ENCODE measurements at regions of chr6 and their contacts with region 1.

Region 1: DNA sequence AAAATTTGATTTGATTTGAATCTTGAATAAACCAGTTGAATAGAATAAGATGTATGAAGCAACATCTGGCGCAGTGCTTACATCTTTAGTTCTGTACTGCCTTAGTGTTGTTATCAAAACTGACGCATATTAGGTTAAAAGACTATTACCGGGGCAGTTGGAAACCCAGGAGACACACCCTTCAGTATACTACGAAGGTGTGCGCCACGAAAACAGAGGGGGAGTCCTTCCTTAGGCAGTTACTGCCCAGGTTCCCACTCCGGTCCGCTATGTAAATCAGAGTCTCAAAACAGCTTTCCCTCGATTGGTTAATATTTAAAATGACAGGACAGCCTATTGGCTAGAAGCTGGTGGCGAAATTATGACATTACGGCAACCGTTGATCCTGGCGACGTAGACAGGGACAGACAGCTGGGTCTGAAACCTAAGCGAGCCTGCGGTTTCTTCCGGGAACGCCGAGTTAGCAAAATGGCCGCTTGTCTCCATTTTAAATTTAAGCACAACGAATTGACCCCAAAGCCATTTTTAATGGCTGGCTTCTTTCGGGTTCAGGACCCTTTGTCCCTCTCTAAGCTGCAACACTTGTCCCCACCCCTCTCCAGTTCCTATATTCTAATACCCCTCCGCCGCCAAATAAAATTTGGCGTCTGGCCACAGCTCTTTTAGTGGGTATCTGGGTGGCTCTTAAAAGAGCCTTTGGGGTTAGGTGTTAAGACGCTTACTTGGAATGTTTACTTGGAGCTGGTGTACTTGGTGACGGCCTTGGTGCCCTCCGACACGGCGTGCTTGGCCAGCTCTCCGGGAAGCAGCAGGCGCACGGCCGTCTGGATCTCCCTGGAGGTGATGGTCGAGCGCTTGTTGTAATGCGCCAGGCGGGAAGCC is 35.8 kb downstream of the HFE start:
- DNase-seq: peak; percentile 94 to 98 (median 98)
- H3K4me3 ChIP-seq: peak overlapping the region; percentile 87 to 98
- H3K4me3 Mint-ChIP-seq: peak overlapping the region; percentile 96 to 100 (median 100)
- H3K27ac ChIP-seq: peak overlapping the region; percentile 89
- H3K27ac Mint-ChIP-seq: peak overlapping the region; percentile 97 to 99 (median 99)
- H3K4me1 ChIP-seq: peaks cover 26% of the 10 kb centered on the region
- H3K4me1 Mint-ChIP-seq: peaks cover 20 to 54% (median 30%) of the 10 kb centered on the region in 4 donors
- H3K27me3 ChIP-seq: no peaks in the 10 kb centered on the region
- H3K27me3 Mint-ChIP-seq: peaks cover 0 to 3% of the 10 kb centered on the region in 2 donors

Region 2: DNA sequence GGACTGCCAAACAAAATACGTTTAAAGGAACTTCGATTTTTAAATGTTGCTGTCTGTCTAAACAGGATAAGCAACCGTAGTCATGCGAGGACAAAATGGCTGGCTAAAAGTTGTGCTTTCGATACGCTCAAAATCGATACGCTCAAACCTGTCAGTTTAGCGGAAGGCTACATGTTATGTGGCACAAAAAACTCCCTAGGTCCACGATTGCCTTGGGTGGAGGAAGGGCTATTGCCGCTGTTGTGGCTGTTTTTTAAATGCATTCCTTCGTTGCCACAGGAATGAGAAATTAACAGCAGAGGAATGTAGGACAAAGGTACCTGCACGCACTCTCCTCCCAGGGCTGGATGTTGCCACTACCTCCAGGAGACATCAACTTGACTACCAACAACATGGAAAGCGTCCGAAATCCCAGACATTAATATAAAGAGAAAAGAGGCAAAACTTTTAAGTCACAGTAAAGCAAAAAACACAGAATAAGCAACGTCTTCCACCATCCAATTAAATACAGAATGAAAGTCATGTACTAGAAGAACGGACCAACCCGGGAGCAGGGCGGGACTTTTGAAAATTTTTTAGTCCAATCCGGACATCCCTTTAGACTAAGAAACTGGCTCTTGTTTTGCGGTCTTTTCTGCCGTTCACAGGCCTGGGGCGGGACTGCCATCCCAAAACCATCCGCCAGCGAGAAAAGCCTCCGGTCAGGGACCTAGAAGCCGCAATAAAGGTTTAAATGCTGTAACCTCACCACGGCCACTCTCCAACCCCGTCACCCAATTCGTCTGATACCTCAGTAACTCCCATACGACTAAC is 68.0 kb before region 1 on chr6:
- CTCF ChIA-PET with region 1: interaction called, 3 read pairs
- POLR2A ChIA-PET with region 1: interaction called, 209 read pairs
- intact Hi-C with region 1: loop called (anchors 1 kb)
- DNase-seq: peak; percentile 89 to 96 (median 91)
- H3K4me3 ChIP-seq: peak overlapping the region; percentile 67 to 78
- H3K4me3 Mint-ChIP-seq: peak overlapping the region; percentile 93 to 96 (median 94)
- H3K27ac ChIP-seq: peak overlapping the region; percentile 84
- H3K27ac Mint-ChIP-seq: peak overlapping the region; percentile 91 to 98 (median 98)
- H3K4me1 ChIP-seq: peaks cover 24% of the 10 kb centered on the region
- H3K4me1 Mint-ChIP-seq: peaks cover 7 to 34% (median 15%) of the 10 kb centered on the region in 4 donors
- H3K27me3 ChIP-seq: no peaks in the 10 kb centered on the region
- H3K27me3 Mint-ChIP-seq: no peaks in the 10 kb centered on the region

Region 3: GRCh38 chr6:26103770-26104456 is 19.1 kb before region 1 on chr6:
- CTCF ChIA-PET with region 1: interaction called, 22 read pairs
- POLR2A ChIA-PET with region 1: interaction called, 290 read pairs
- intact Hi-C with region 1: loop called (anchors 1 kb)
- DNase-seq: peak; percentile 93 to 96 (median 94)
- H3K4me3 ChIP-seq: peak overlapping the region; percentile 36 to 39
- H3K4me3 Mint-ChIP-seq: peak overlapping the region; percentile 84 to 96 (median 92)
- H3K27ac ChIP-seq: peak overlapping the region; percentile 66
- H3K27ac Mint-ChIP-seq: peak overlapping the region; percentile 96 to 100 (median 99)
- H3K4me1 ChIP-seq: peaks cover 17% of the 10 kb centered on the region
- H3K4me1 Mint-ChIP-seq: peaks cover 11 to 19% (median 15%) of the 10 kb centered on the region in 4 donors
- H3K27me3 ChIP-seq: no peaks in the 10 kb centered on the region
- H3K27me3 Mint-ChIP-seq: peaks cover 2 to 6% of the 10 kb centered on the region in 2 donors

Region 4: DNA sequence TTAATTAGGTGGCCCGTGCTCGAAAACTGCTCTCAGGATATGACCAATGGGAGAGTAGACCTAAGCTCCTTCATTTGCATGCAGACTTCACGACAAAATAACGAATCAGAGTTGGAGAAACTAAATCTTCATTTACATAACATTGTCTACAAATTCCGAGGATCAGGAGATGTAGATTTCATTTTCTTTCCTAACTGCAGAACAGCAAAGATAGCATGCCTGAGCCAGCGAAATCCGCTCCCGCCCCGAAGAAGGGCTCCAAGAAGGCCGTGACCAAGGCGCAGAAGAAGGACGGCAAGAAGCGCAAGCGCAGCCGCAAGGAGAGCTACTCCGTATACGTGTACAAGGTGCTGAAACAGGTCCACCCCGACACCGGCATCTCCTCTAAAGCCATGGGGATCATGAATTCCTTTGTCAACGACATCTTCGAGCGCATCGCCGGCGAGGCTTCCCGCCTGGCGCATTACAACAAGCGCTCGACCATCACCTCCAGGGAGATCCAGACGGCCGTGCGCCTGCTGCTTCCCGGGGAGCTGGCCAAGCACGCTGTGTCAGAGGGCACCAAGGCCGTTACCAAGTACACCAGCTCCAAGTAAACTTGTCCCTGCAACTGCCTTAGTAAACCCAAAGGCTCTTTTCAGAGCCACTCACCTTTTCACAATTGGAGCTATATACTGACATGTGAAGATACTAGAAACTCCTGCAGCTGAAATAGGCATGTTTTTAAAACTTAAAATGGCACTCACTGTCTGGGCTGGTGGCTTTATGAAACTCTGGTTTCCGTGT is 60.7 kb after region 1 on chr6:
- CTCF ChIA-PET with region 1: interaction called, 3 read pairs
- POLR2A ChIA-PET with region 1: interaction called, 288 read pairs
- intact Hi-C with region 1: loop called (anchors 2 kb)
- DNase-seq: peak; percentile 72 to 81 (median 79)
- H3K4me3 ChIP-seq: peak overlapping the region; percentile 2 to 69
- H3K4me3 Mint-ChIP-seq: peak overlapping the region; percentile 90 to 100 (median 96)
- H3K27ac ChIP-seq: peak overlapping the region; percentile 67
- H3K27ac Mint-ChIP-seq: peak overlapping the region; percentile 78 to 99 (median 95)
- H3K4me1 ChIP-seq: peaks cover 45% of the 10 kb centered on the region
- H3K4me1 Mint-ChIP-seq: peaks cover 29 to 54% (median 37%) of the 10 kb centered on the region in 4 donors
- H3K27me3 ChIP-seq: no peaks in the 10 kb centered on the region
- H3K27me3 Mint-ChIP-seq: no peaks in the 10 kb centered on the region

Region 5: DNA sequence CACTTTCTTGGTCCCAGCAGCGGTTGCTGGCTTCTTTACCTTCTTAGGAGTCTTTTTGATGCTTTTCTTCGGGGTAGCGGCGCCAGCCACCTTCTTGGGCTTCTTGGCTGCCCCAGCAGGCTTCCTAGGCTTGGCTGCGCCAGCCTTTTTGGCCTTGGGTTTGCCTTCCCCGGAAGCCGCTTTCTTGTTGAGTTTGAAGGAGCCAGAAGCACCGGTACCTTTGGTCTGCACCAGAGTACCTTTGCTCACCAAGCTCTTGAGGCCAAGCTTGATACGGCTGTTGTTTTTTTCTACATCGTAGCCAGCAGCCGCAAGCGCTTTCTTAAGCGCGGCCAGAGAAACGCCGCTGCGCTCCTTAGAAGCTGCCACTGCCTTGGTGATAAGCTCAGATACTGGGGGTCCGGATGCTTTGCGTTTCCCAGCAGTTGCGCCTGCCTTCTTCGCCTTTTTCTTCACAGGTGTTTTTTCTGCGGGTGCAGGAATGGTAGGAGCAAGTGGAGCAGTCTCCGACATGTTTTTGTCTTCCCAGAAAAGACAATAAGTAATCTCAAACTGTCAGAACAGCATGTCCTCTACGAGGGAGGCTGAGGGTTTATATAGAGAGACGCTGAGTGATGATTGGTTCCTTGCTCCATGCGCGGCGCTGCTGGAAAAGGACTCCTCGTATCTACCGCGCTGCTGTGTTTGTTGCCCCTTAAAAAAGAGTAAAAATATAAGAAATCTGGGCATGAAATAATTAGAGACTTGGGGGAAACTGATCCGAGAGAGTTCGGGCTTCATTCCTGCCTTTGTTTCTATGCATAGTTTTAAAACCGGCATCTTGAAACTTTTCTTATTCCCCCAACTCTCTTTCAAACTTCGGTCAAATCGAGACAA is 111.6 kb after region 1 on chr6:
- CTCF ChIA-PET with region 1: interaction called, 5 read pairs
- POLR2A ChIA-PET with region 1: interaction called, 179 read pairs
- intact Hi-C with region 1: no loop called
- DNase-seq: peak; percentile 70 to 87 (median 85)
- H3K4me3 ChIP-seq: peak overlapping the region; percentile 66 to 95
- H3K4me3 Mint-ChIP-seq: peak overlapping the region; percentile 93 to 99 (median 96)
- H3K27ac ChIP-seq: peak overlapping the region; percentile 83
- H3K27ac Mint-ChIP-seq: peak overlapping the region; percentile 90 to 99 (median 96)
- H3K4me1 ChIP-seq: peaks cover 23% of the 10 kb centered on the region
- H3K4me1 Mint-ChIP-seq: peaks cover 18 to 43% (median 26%) of the 10 kb centered on the region in 4 donors
- H3K27me3 ChIP-seq: no peaks in the 10 kb centered on the region
- H3K27me3 Mint-ChIP-seq: no peaks in the 10 kb centered on the region

Region 6: DNA sequence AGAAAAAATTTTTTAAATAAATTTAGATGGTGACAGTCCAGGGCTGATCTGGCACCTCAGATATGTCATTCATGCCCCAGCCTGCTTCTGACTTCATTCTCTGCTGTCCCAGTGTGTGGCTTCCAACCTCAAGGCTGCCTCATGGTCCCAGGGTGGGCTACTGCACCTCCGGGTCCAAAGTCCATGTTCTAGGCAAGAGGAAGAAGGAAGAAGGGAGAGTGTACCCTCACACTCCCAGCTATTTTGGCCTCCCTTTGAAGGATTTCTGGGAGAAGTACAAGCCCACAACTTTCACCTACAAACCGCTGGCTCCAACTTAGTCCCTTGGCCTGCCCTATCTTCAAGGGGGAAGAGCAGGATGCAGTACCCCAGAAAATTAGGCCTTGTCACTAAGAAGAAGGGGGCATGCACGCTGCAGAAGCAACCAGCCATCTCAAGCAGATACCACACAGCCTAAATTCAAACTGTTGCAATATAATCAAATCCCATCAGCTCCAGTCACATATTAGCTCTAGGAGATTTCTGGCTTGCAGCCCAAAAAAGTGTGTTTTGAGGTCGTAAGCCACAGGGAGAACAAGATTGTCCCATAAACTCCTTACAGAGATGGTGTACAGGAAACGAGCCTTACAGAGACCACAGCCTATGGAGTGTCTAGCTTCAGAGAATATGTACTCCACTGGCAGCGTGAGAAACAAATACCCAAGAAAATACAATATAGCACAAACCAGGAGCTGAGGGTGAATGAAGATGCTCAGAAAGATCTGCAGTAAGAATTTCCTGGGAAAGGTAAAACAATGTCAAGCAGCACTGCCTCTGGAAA is 241.1 kb after region 1 on chr6:
- CTCF ChIA-PET with region 1: no interaction called
- POLR2A ChIA-PET with region 1: no interaction called
- intact Hi-C with region 1: no loop called
- DNase-seq: peak in 3 of 5 donors; percentile 40 to 44 (median 43)
- H3K4me3 ChIP-seq: peak overlapping the region; percentile 79 to 87
- H3K4me3 Mint-ChIP-seq: peak overlapping the region in 1 of 8 donors; percentile 21
- H3K27ac ChIP-seq: peak overlapping the region; percentile 96
- H3K27ac Mint-ChIP-seq: no peak overlapping the region
- H3K4me1 ChIP-seq: peaks cover 69% of the 10 kb centered on the region
- H3K4me1 Mint-ChIP-seq: peaks cover 45 to 56% (median 52%) of the 10 kb centered on the region in 4 donors
- H3K27me3 ChIP-seq: no peaks in the 10 kb centered on the region
- H3K27me3 Mint-ChIP-seq: no peaks in the 10 kb centered on the region

Region 7: DNA sequence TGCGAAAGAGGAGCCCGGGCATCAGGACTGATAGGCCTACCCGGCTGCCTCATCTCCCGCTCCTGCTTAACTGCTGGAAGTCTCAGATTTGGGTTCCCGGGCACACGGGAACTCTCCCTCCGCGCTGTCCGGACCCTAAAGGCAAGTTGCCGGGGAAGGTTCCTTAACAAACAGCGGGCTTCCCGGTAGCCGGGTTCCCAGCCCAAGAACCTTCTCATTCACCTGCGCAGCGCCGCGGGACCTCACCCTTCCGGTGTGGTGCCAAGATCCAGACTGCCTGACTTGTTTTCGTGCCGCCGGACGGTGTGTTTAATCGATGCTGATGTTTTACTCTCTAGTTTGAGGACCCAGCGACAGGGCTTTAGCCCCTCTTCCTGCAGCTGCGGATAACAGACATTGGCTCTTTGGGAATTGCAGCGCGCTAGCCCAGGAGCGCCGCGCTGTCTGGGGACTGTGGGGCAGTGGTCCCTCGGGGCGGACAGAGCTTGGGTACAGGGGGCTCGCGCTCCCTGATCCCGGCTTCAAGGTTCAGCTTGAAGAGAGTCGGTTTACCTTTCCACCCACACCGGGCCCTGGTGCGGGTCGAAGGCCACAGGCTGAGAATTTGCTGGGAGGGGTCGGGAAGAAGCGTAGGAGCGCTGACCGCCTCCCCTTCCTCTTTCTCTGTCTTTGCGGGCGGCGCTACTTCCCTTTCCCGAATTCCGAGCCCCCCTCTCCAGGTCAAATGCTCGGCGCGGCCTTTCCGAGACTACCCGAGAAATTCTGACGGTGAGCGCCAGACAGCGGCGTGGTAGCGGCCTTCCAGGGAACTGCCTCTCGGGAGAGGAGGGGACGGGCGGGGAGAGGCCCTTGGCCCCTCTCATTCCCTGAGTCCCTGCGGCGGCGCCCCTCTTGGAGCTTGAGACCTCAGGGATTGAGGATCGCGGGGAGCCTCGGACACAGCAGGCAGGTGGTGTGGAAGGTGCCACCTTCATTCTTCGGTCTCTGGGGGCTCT is 491.0 kb after region 1 on chr6:
- CTCF ChIA-PET with region 1: no interaction called
- POLR2A ChIA-PET with region 1: no interaction called
- intact Hi-C with region 1: no loop called
- DNase-seq: peak in 2 of 5 donors; percentile 28 to 30
- H3K4me3 ChIP-seq: peak overlapping the region in 1 of 2 donors; percentile 30
- H3K4me3 Mint-ChIP-seq: peak overlapping the region; percentile 77 to 90 (median 82)
- H3K27ac ChIP-seq: no peak overlapping the region
- H3K27ac Mint-ChIP-seq: peak overlapping the region in 5 of 7 donors; percentile 29 to 86 (median 66)
- H3K4me1 ChIP-seq: peaks cover 13% of the 10 kb centered on the region
- H3K4me1 Mint-ChIP-seq: peaks cover 0 to 30% (median 14%) of the 10 kb centered on the region in 4 donors
- H3K27me3 ChIP-seq: peaks cover 19% of the 10 kb centered on the region
- H3K27me3 Mint-ChIP-seq: peaks cover 16 to 31% of the 10 kb centered on the region in 2 donors

Region 8: DNA sequence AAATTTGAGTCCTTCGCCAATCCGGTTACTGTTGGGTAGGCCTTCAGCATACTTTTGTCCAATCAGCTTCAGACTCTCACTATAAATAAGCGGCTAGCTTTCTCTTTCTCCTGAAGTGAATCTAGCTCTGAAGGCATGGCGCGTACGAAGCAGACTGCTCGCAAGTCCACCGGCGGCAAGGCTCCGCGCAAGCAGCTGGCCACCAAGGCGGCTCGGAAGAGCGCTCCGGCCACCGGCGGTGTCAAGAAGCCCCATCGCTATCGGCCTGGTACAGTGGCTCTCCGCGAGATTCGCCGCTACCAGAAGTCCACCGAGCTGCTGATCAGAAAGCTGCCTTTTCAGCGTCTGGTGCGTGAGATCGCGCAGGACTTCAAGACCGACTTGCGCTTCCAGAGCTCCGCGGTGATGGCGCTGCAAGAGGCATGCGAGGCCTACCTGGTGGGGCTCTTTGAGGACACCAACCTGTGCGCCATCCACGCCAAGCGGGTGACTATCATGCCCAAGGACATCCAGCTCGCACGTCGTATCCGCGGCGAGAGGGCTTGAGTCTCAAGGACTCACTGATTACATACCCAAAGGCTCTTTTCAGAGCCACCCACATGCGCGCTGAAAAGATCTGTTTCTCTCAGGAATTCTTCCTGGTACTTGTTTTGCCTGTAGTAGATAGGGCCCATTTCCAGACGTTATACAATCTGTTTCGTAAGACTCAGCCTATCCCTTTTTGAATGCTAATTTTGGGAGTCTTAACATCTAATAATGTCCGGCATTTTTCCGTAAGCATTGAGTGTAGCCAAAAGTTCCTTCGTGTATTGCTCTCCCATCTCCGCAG is 1687.1 kb after region 1 on chr6:
- CTCF ChIA-PET with region 1: no interaction called
- POLR2A ChIA-PET with region 1: interaction called, 64 read pairs
- intact Hi-C with region 1: no loop called
- DNase-seq: peak; percentile 85 to 94 (median 92)
- H3K4me3 ChIP-seq: peak overlapping the region; percentile 31 to 67
- H3K4me3 Mint-ChIP-seq: peak overlapping the region; percentile 92 to 99 (median 96)
- H3K27ac ChIP-seq: peak overlapping the region; percentile 79
- H3K27ac Mint-ChIP-seq: peak overlapping the region; percentile 94 to 98 (median 97)
- H3K4me1 ChIP-seq: peaks cover 49% of the 10 kb centered on the region
- H3K4me1 Mint-ChIP-seq: peaks cover 39 to 74% (median 50%) of the 10 kb centered on the region in 4 donors
- H3K27me3 ChIP-seq: no peaks in the 10 kb centered on the region
- H3K27me3 Mint-ChIP-seq: no peaks in the 10 kb centered on the region